ENCODE measurements at regions of chr19 and their contacts with region 1.

Region 1: GRCh38 chr19:17511724-17512573 is 500 bp downstream of the PGLS start:
- DNase-seq: peak; percentile 71 to 91
- H3K4me3 ChIP-seq: peak overlapping the region; percentile 73 to 91 (median 79)
- H3K27ac ChIP-seq: peak overlapping the region; percentile 93
- H3K4me1 ChIP-seq: peaks cover 0 to 6% (median 2%) of the 10 kb centered on the region in 4 experiments; a peak in 3 of 7 replicates
- H3K27me3 ChIP-seq: no peaks in the 10 kb centered on the region; a peak in 1 of 7 replicates
- CTCF ChIP-seq: peak; percentile 38 to 39 (median 39)
- EP300 ChIP-seq: peak in 1 of 2 experiments; percentile 12; a peak in 1 of 3 replicates
- POLR2A ChIP-seq: peak in 1 of 2 experiments; percentile 45; a peak in 2 of 3 replicates
- RAD21 ChIP-seq: peak; percentile 21 to 35; a peak in 2 of 4 replicates

Region 2: GRCh38 chr19:17522988-17523872 is 11.3 kb after region 1 on chr19:
- CTCF ChIA-PET with region 1: interaction called, 4 read pairs
- POLR2A ChIA-PET with region 1: interaction called, 58 read pairs
- DNase-seq: no peak
- H3K4me3 ChIP-seq: no peak overlapping the region
- H3K27ac ChIP-seq: no peak overlapping the region
- H3K4me1 ChIP-seq: no peaks in the 10 kb centered on the region; a peak in 1 of 7 replicates
- H3K27me3 ChIP-seq: no peaks in the 10 kb centered on the region
- CTCF ChIP-seq: no peak
- EP300 ChIP-seq: no peak
- POLR2A ChIP-seq: no peak
- RAD21 ChIP-seq: no peak

Region 3: GRCh38 chr19:17530586-17530985 is 18.6 kb after region 1 on chr19:
- CTCF ChIA-PET with region 1: interaction called, 3 read pairs
- POLR2A ChIA-PET with region 1: interaction called, 58 read pairs
- DNase-seq: peak in 1 of 2 experiments; percentile 66
- H3K4me3 ChIP-seq: peak overlapping the region in 1 of 4 experiments; percentile 5; a peak in 2 of 8 replicates
- H3K27ac ChIP-seq: no peak overlapping the region
- H3K4me1 ChIP-seq: peaks cover 0 to 5% (median 2%) of the 10 kb centered on the region in 4 experiments; a peak in 2 of 7 replicates
- H3K27me3 ChIP-seq: peaks cover 0 to 3% (median 0%) of the 10 kb centered on the region in 4 experiments; a peak in 1 of 7 replicates
- CTCF ChIP-seq: no peak
- EP300 ChIP-seq: no peak
- POLR2A ChIP-seq: no peak
- RAD21 ChIP-seq: no peak

Region 4: DNA sequence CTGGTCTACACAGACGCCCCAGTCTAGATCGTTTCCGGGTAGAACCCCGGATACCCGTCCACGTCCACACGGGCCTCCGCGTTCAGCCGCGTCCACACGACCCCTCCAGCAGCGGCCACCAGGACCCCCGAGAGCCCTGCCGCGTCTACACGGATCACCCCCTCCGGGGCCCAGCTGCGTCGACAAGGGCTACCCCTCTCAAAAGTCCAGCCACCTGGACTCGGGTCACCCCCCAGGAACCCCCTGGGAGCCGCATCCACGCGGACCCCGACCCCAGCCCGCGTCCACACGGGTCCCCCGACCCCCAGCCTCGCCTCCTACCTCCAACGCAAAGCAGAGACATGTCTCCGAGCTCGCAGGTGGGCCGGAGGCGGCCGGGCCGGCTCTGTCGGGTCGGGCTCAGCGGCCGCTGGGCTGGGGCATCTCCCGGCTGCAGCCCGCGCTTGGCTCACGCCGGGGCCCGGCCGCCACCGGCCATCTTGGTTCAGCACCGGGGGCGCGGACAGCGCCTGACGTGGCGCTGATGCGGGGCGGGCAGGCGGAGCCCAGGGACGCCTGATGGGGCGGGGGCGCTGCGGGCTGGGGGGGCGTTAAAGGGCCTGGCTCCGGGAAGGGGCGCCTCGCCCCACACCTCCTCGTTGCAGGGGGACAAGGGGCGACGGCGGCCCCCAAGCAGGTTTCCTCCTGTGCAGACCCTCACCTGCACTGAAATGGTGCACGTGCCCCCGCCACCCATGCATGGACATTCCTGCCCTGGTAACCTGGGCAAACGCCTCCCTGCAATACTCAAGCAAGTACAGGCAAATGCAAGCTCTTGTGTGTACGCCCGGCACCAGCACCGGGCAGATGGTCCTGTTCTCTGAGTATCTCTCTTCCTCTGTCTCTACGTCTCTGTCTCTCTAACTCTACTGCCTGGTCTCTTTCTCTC is 176.2 kb after region 1 on chr19 and contains the start of gene UNC13A:
- CTCF ChIA-PET with region 1: no interaction called
- POLR2A ChIA-PET with region 1: no interaction called
- DNase-seq: peak in 1 of 2 experiments; percentile 98
- H3K4me3 ChIP-seq: peak within 1 kb of the TSS; percentile 72 to 97 (median 84)
- H3K27ac ChIP-seq: no peak within 1 kb of the TSS
- H3K4me1 ChIP-seq: peaks cover 5 to 15% (median 11%) of the 10 kb centered on the region in 4 experiments
- H3K27me3 ChIP-seq: no peaks in the 10 kb centered on the region
- CTCF ChIP-seq: no peak; a peak in 1 of 4 replicates
- EP300 ChIP-seq: no peak; a peak in 1 of 3 replicates
- POLR2A ChIP-seq: 0 out of 3 replicates have a peak, but pooled peaks of 1 of the 2 experiments have one; percentile 19
- RAD21 ChIP-seq: no peak; a peak in 1 of 4 replicates
- total RNA-seq, gene UNC13A: 45.0 and 47.6 TPM in 2 replicates

Measured in H1 (cell line).